ENCODE measurements at regions of chr5 and their contacts with region 1.

Region 1: GRCh38 chr5:55540024-55540423 is 5.3 kb upstream of the PLPP1 start:
- DNase-seq: no peak
- ATAC-seq: no peak
- H3K4me3 ChIP-seq: no peak overlapping the region
- H3K4me1 ChIP-seq: peaks cover 5% of the 10 kb centered on the region
- CTCF ChIP-seq: no peak

Region 2: GRCh38 chr5:54915466-54916027 is 624.5 kb before region 1 on chr5:
- intact Hi-C with region 1: no loop called
- DNase-seq: no peak
- ATAC-seq: no peak
- H3K4me3 ChIP-seq: no peak overlapping the region
- H3K4me1 ChIP-seq: no peaks in the 10 kb centered on the region
- CTCF ChIP-seq: no peak

Region 3: GRCh38 chr5:55645304-55645703 is 105.3 kb after region 1 on chr5:
- intact Hi-C with region 1: loop called in 1 of 2 experiments (anchors 10 kb)
- DNase-seq: no peak
- ATAC-seq: no peak
- H3K4me3 ChIP-seq: no peak overlapping the region
- H3K4me1 ChIP-seq: no peaks in the 10 kb centered on the region
- CTCF ChIP-seq: no peak